Natural killer cell (primary cell): ENCODE measurements at regions of chr15 and their contacts with region 1.

Region 1: DNA sequence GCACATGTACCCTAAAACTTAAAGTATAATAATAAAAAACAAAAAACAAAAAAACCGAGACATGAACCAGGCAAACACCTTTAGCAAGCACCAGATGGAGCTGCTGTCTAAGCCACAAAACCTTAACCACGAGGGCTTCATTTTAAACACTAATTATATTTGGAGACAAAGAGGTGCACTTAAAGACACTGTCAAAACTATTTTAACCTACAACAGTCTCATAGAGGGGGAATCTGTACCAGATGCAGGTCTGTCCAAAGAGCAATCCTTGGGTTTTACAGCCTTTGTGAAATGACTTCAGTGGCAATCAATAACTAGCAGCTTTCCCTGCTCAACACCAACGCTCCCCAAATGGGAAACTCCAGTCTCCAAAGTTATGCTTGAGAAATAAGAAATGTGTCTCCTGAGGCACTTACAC is 115.7 kb upstream of the TSPAN3 start:
- DNase-seq: peak in 1 of 2 donors; percentile 59
- ATAC-seq: peak in 2 of 3 donors; percentile 19 to 45
- H3K4me3 ChIP-seq: no peak overlapping the region
- H3K4me3 Mint-ChIP-seq: peak overlapping the region; percentile 45
- H3K27ac ChIP-seq: no peak overlapping the region
- H3K27ac Mint-ChIP-seq: peak overlapping the region; percentile 59 to 74
- H3K4me1 ChIP-seq: peaks cover 39% of the 10 kb centered on the region
- H3K4me1 Mint-ChIP-seq: peaks cover 49 to 50% of the 10 kb centered on the region in 2 donors
- H3K27me3 ChIP-seq: no peaks in the 10 kb centered on the region
- H3K27me3 Mint-ChIP-seq: no peaks in the 10 kb centered on the region
- CTCF ChIP-seq: peak; percentile 79

Region 2: GRCh38 chr15:77251662-77252061 is 65.1 kb after region 1 on chr15:
- intact Hi-C with region 1: no loop called
- DNase-seq: no peak
- ATAC-seq: no peak
- H3K4me3 ChIP-seq: no peak overlapping the region
- H3K4me3 Mint-ChIP-seq: no peak overlapping the region
- H3K27ac ChIP-seq: no peak overlapping the region
- H3K27ac Mint-ChIP-seq: no peak overlapping the region
- H3K4me1 ChIP-seq: no peaks in the 10 kb centered on the region
- H3K4me1 Mint-ChIP-seq: no peaks in the 10 kb centered on the region
- H3K27me3 ChIP-seq: no peaks in the 10 kb centered on the region
- H3K27me3 Mint-ChIP-seq: no peaks in the 10 kb centered on the region
- CTCF ChIP-seq: no peak

Region 3: GRCh38 chr15:77419836-77420609 is 233.4 kb after region 1 on chr15 and contains the start of gene PEAK1:
- intact Hi-C with region 1: loop called (anchors 5 kb)
- DNase-seq: peak; percentile 99
- ATAC-seq: peak; percentile 94 to 100 (median 94)
- H3K4me3 ChIP-seq: peak within 1 kb of the TSS; percentile 62
- H3K4me3 Mint-ChIP-seq: peak within 1 kb of the TSS; percentile 100
- H3K27ac ChIP-seq: peak within 1 kb of the TSS; percentile 87
- H3K27ac Mint-ChIP-seq: peak within 1 kb of the TSS; percentile 98 to 99
- H3K4me1 ChIP-seq: peaks cover 15% of the 10 kb centered on the region
- H3K4me1 Mint-ChIP-seq: peaks cover 42 to 54% of the 10 kb centered on the region in 2 donors
- H3K27me3 ChIP-seq: no peaks in the 10 kb centered on the region
- H3K27me3 Mint-ChIP-seq: no peaks in the 10 kb centered on the region
- CTCF ChIP-seq: no peak
- total RNA-seq, gene PEAK1: 59.3 to 73.9 (median 69.1) TPM

Region 4: DNA sequence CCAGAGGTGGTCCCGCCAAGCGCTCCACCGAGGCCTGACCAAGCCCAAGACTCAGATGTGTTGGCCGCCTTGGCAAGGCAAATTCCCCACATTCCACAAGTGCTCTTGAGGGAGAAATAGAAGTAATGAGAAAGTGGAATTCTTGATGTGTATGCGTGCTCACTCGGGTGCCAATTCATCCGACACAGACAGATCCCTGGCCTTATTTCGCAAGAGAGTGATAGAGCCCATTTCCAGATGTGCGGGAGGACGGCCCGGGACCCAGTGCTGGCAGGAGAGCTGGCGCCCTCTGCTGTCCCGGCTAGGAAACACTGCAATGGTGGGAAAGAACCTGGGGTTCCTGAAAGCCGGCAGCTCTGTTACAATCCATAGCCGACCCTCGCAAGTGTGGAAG is 310.1 kb after region 1 on chr15:
- intact Hi-C with region 1: loop called (anchors 1 kb)
- DNase-seq: peak; percentile 72 to 81
- ATAC-seq: peak; percentile 80 to 94 (median 92)
- H3K4me3 ChIP-seq: no peak overlapping the region
- H3K4me3 Mint-ChIP-seq: no peak overlapping the region
- H3K27ac ChIP-seq: no peak overlapping the region
- H3K27ac Mint-ChIP-seq: no peak overlapping the region
- H3K4me1 ChIP-seq: peaks cover 17% of the 10 kb centered on the region
- H3K4me1 Mint-ChIP-seq: peaks cover 10 to 17% of the 10 kb centered on the region in 2 donors
- H3K27me3 ChIP-seq: no peaks in the 10 kb centered on the region
- H3K27me3 Mint-ChIP-seq: no peaks in the 10 kb centered on the region
- CTCF ChIP-seq: peak; percentile 96

Region 5: DNA sequence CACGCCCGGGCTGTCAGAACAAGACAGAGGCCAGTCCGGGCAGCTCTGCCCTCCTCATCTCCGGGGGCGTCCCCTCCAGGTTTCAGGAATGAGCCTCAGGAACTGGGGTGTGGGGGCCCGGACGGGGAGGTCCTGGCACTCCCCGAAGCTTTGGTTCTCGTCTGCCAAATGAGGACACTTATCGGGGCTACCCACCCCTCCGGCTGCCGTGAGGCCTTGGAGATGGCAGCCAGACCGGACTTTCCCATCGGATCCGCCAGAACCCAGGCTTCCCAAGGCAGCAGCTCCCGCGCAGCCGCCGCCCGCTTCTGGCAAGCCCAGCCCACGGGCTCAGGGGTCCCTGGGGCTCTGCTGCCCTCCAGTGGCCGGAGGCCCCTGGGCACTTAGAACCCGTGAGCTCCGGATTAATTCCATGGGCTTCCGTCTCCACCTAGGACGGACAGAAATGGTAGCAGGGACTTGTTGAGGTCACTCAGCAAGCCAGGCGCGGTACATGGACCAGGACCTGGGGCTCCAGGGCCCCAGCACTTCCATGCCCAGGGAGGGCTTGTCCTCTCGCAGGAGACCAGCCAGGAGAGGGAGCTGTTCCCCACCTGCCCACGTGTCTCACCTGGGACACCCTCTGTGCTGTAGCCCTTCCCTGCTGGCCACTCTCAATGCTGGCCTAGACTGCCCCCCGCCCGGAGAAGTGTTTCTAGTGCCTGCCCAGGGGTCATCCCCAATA is 356.7 kb after region 1 on chr15:
- intact Hi-C with region 1: loop called (anchors 1 kb)
- DNase-seq: peak; percentile 75 to 85
- ATAC-seq: peak; percentile 86 to 99 (median 97)
- H3K4me3 ChIP-seq: peak overlapping the region; percentile 58
- H3K4me3 Mint-ChIP-seq: peak overlapping the region; percentile 89
- H3K27ac ChIP-seq: no peak overlapping the region
- H3K27ac Mint-ChIP-seq: peak overlapping the region; percentile 34 to 77
- H3K4me1 ChIP-seq: peaks cover 14% of the 10 kb centered on the region
- H3K4me1 Mint-ChIP-seq: peaks cover 0 to 8% of the 10 kb centered on the region in 2 donors
- H3K27me3 ChIP-seq: no peaks in the 10 kb centered on the region
- H3K27me3 Mint-ChIP-seq: no peaks in the 10 kb centered on the region
- CTCF ChIP-seq: peak; percentile 90